ENCODE measurements at regions of chrX and their contacts with region 1.

Region 1: GRCh38 chrX:150184487-150184886 is 178.6 kb upstream of the MAMLD1 start:
- DNase-seq: peak; percentile 92
- ATAC-seq: peak; percentile 96
- H3K4me3 ChIP-seq: no peak overlapping the region
- H3K27ac ChIP-seq: peak overlapping the region; percentile 82
- H3K4me1 ChIP-seq: peaks cover 17% of the 10 kb centered on the region
- H3K27me3 ChIP-seq: no peaks in the 10 kb centered on the region
- CTCF ChIP-seq: no peak

Region 2: DNA sequence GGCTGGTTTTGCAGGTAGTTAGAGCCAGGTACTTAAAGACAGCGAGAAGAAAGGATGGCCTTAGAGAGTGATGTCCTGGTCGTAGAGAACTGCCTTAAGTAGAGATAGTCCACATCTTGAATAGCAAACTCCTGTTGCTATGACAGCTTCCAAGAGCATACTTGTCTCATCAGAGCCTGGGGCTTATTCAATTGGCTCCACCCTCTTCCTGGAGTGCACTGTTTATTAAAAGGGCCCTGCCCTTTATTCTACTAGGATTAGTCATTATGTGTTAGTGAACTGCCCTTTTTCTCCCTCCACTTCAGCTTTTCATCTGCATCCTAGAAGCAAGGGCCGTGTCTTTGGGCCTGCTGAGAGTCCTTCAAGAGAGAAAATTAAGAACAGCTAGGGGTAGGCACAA is 151.7 kb before region 1 on chrX:
- CTCF ChIA-PET with region 1: no interaction called
- POLR2A ChIA-PET with region 1: no interaction called
- intact Hi-C with region 1: loop called (anchors 2 kb)
- DNase-seq: peak; percentile 87
- ATAC-seq: peak; percentile 84
- H3K4me3 ChIP-seq: peak overlapping the region; percentile 33; the same call in 1 of the 2 replicates
- H3K27ac ChIP-seq: peak overlapping the region; percentile 76
- H3K4me1 ChIP-seq: peaks cover 50% of the 10 kb centered on the region
- H3K27me3 ChIP-seq: no peaks in the 10 kb centered on the region
- CTCF ChIP-seq: no peak

Region 3: DNA sequence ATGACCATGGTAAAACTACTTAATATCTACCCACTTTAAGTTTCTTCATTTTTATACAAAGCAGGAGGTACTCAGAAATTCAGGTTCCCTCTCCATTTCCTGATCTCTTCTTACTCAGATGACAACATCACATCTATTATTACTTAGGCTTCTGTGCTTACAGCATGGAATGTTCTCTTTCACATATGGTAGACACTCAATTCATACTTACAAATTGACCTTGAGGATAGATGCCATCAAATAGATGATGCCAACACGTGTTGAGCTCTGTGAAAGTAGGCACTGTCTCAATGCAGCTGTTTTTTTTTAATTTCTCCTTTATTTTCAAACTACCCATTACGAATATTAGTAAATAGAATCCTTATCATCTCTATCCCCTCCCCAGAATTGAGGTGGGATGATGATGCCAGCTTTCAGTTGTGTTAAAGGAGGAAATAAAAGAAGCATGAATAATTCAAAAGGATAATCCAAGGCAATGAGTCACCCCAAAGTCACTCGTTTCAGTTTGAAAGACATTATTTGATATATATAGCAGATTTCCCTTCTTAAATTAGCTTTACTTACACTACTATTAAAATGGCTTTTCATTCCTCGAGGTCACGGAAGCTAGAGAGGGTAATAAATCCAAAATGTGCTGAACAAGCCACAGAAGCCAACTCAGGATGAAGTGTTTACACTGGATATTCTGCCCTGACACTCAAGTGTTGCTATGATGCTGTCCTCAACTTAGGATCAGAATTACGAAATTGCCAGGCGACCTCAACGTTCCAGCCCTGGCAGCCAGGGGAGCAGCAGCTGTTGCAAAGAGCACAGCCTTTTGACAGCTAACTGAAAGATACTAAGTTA is 122.0 kb before region 1 on chrX:
- CTCF ChIA-PET with region 1: no interaction called
- POLR2A ChIA-PET with region 1: no interaction called
- intact Hi-C with region 1: loop called (anchors 1 kb)
- DNase-seq: peak; percentile 78
- ATAC-seq: peak; percentile 89
- H3K4me3 ChIP-seq: no peak overlapping the region; the same call in 1 of the 2 replicates
- H3K27ac ChIP-seq: peak overlapping the region; percentile 67
- H3K4me1 ChIP-seq: peaks cover 35% of the 10 kb centered on the region
- H3K27me3 ChIP-seq: no peaks in the 10 kb centered on the region
- CTCF ChIP-seq: no peak

Region 4: GRCh38 chrX:150084496-150085229 is 99.8 kb before region 1 on chrX:
- CTCF ChIA-PET with region 1: no interaction called
- POLR2A ChIA-PET with region 1: no interaction called
- intact Hi-C with region 1: loop called (anchors 1 kb)
- DNase-seq: peak; percentile 87
- ATAC-seq: peak; percentile 83
- H3K4me3 ChIP-seq: peak overlapping the region; percentile 11; the same call in 1 of the 2 replicates
- H3K27ac ChIP-seq: peak overlapping the region; percentile 94
- H3K4me1 ChIP-seq: peaks cover 33% of the 10 kb centered on the region
- H3K27me3 ChIP-seq: no peaks in the 10 kb centered on the region
- CTCF ChIP-seq: no peak

Region 5: GRCh38 chrX:150303386-150304097 is 119.1 kb after region 1 on chrX:
- CTCF ChIA-PET with region 1: no interaction called
- POLR2A ChIA-PET with region 1: no interaction called
- intact Hi-C with region 1: loop called (anchors 1 kb)
- DNase-seq: peak; percentile 67
- ATAC-seq: peak; percentile 71
- H3K4me3 ChIP-seq: peak overlapping the region; percentile 31; the same call in 1 of the 2 replicates
- H3K27ac ChIP-seq: peak overlapping the region; percentile 65
- H3K4me1 ChIP-seq: peaks cover 25% of the 10 kb centered on the region
- H3K27me3 ChIP-seq: no peaks in the 10 kb centered on the region
- CTCF ChIP-seq: no peak

Region 6: DNA sequence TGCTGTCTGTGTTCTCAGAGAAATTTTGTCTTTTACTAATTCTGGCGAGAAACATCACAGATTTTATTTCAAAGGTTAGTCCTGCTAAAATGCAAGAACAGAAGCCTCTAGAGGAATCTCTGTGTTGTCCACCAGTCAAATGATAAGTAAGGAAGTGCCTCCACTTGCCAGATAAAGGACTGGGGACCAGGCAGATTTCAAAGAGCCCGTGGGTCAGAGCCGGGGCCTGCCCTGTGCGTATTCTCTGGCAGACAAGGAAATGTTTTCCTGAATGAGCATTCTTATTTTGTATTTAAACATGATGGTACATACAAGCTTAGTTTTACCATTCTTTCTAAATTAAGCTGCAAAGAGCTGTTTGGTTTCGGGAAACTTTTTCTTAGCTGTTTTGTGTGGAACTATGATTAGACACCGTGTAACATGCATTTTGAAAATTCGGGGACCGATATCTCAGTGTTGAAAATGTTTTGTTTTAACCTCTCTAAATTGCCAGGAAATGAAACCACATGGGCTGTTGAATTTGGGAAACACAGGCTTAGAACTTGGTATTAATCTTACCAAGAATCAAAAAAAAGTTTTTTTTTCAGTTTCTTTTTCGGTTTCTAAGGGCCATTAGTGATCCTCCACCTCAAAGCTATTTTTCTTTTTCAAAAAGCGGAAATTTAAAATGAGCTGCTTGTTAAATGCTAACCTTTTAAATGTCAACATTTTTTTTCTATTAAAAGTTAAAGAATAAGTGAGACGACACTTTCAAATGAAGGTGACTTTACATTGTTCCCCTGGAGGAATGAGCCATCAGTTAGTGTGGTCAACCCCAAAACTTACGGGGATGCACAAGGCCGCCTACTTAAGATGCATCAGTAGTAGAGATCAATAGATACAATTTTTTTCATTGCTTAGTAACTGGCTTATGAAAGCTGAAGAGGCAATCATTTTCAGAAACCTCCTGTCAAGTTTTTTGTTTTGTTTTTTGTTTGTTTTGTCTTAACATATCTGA is 294.3 kb after region 1 on chrX:
- CTCF ChIA-PET with region 1: no interaction called
- POLR2A ChIA-PET with region 1: no interaction called
- intact Hi-C with region 1: no loop called
- DNase-seq: no peak
- ATAC-seq: no peak
- H3K4me3 ChIP-seq: no peak overlapping the region
- H3K27ac ChIP-seq: no peak overlapping the region
- H3K4me1 ChIP-seq: peaks cover 14% of the 10 kb centered on the region
- H3K27me3 ChIP-seq: no peaks in the 10 kb centered on the region
- CTCF ChIP-seq: no peak

Region 7: DNA sequence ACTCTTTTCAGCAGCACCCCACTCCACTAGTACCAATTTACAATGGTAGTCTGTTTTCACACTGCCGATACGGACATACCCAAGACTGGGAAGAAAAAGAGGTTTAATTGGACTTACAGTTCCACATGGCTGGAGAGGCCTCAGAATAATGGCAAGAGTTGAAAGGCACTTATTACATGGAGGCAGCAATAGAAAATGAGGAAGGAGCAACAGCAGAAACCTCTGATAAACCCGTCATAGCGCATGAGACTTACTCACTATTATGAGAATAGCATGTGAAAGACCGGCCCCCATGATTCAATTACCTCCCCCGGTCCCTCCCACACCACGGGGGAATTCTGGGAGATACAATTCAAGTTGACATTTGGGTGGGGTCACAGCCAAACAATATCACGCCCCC is 1694.1 kb after region 1 on chrX:
- CTCF ChIA-PET with region 1: no interaction called
- POLR2A ChIA-PET with region 1: no interaction called
- intact Hi-C with region 1: no loop called
- DNase-seq: no peak
- ATAC-seq: no peak
- H3K4me3 ChIP-seq: no peak overlapping the region
- H3K27ac ChIP-seq: no peak overlapping the region
- H3K4me1 ChIP-seq: no peaks in the 10 kb centered on the region
- H3K27me3 ChIP-seq: no peaks in the 10 kb centered on the region
- CTCF ChIP-seq: no peak

Measured in PC-3 (cell line).